ENCODE measurements at regions of chr2 and their contacts with region 1.

Region 1: DNA sequence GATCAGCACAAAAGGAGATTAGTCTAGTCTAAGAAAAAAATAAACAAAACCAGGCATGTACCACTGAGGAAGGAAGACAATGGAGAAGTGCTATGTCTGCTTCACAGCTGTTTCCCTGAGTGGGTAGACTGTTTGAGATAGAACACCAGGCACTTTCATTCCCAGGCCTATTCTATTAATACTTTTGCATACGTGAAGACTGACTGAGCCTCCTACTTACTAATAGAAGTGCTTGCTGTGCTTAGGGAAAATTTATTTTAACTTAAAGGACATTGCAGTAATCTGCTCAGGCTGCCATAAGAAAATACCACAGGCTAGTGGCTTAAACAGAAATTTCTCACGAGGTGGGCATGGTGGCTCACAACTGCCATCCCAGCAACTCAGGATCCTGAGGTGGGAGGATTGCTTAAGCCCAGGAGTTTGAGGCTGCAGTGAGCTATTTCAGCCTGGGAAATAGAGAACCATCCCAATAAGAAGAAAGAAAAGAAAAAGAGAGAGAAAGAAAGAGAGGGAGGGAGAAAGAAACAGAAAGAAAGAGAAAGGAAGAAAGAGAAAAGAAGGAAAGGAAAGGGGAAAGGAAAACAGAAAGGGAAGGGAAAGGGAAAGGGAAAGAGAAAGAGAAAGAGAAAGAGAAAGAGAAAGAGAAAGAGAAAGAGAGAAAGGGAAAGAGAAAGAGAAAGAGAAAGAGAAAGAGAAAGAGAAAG is 33.0 kb downstream of the CMPK2 start:
- DNase-seq: no peak
- ATAC-seq: no peak
- H3K4me3 ChIP-seq: no peak overlapping the region
- H3K4me3 Mint-ChIP-seq: peak overlapping the region in 1 of 3 donors; percentile 26
- H3K27ac ChIP-seq: peak overlapping the region; percentile 19
- H3K27ac Mint-ChIP-seq: peak overlapping the region; percentile 68 to 69
- H3K4me1 ChIP-seq: no peaks in the 10 kb centered on the region
- H3K4me1 Mint-ChIP-seq: peaks cover 7 to 13% (median 9%) of the 10 kb centered on the region in 3 donors
- H3K27me3 ChIP-seq: no peaks in the 10 kb centered on the region
- H3K27me3 Mint-ChIP-seq: no peaks in the 10 kb centered on the region

Region 2: GRCh38 chr2:6443061-6443823 is 389.5 kb before region 1 on chr2:
- CTCF ChIA-PET with region 1: no interaction called
- POLR2A ChIA-PET with region 1: no interaction called
- DNase-seq: no peak
- ATAC-seq: no peak
- H3K4me3 ChIP-seq: no peak overlapping the region
- H3K4me3 Mint-ChIP-seq: no peak overlapping the region
- H3K27ac ChIP-seq: no peak overlapping the region
- H3K27ac Mint-ChIP-seq: no peak overlapping the region
- H3K4me1 ChIP-seq: no peaks in the 10 kb centered on the region
- H3K4me1 Mint-ChIP-seq: no peaks in the 10 kb centered on the region
- H3K27me3 ChIP-seq: no peaks in the 10 kb centered on the region
- H3K27me3 Mint-ChIP-seq: no peaks in the 10 kb centered on the region

Region 3: DNA sequence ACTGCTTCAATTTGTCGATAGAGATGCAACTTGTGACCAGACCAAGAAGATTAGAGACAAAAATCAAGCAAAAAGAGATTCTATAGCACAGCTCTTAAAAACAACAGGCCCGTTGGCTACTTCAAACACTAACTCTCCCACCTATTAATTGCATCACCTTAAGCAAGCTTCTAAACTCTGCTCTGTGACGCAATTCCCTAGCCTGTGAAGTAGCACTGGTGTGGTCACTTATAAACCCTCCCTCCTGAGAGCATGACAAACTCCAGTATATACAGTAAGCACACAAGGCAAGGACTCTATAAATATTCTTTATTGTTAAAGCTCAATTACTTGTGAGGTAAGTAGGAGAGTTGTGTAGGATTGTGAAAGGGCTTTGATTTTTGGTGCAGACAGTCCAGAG is 39.4 kb before region 1 on chr2:
- CTCF ChIA-PET with region 1: no interaction called
- POLR2A ChIA-PET with region 1: no interaction called
- DNase-seq: no peak
- ATAC-seq: no peak
- H3K4me3 ChIP-seq: no peak overlapping the region
- H3K4me3 Mint-ChIP-seq: no peak overlapping the region
- H3K27ac ChIP-seq: no peak overlapping the region
- H3K27ac Mint-ChIP-seq: no peak overlapping the region
- H3K4me1 ChIP-seq: no peaks in the 10 kb centered on the region
- H3K4me1 Mint-ChIP-seq: no peaks in the 10 kb centered on the region
- H3K27me3 ChIP-seq: peaks cover 0 to 4% of the 10 kb centered on the region in 2 experiments
- H3K27me3 Mint-ChIP-seq: peaks cover 6 to 14% of the 10 kb centered on the region in 2 donors

Region 4: DNA sequence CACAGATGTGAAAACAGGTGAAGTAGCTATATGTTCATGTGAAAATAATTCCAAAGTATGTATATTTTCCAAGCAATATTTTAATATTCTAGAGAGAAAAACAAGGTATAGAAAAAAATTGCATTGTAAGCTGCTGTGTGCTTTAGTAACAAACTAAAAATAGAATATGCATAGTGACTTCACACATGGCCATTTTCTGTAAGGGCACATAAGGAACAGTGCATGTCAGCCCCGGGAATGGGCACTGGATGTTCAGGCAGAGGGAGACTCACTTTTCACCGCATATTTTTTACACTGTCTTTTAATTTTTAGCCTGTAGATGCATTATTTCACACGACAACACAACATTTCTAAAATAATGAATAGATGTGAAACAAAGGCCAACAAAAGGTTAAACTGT is 13.1 kb before region 1 on chr2:
- CTCF ChIA-PET with region 1: interaction called in 1 of 2 experiments, 3 read pairs
- POLR2A ChIA-PET with region 1: interaction called in 1 of 2 experiments, 14 read pairs
- DNase-seq: no peak
- ATAC-seq: no peak
- H3K4me3 ChIP-seq: no peak overlapping the region
- H3K4me3 Mint-ChIP-seq: no peak overlapping the region
- H3K27ac ChIP-seq: no peak overlapping the region
- H3K27ac Mint-ChIP-seq: no peak overlapping the region
- H3K4me1 ChIP-seq: no peaks in the 10 kb centered on the region
- H3K4me1 Mint-ChIP-seq: no peaks in the 10 kb centered on the region
- H3K27me3 ChIP-seq: peaks cover 0 to 16% of the 10 kb centered on the region in 2 experiments
- H3K27me3 Mint-ChIP-seq: peaks cover 7 to 18% of the 10 kb centered on the region in 2 donors

Measured in T-cell (primary cell).